Activated CD4-positive, alpha-beta T cell treated with anti-CD3 and anti-CD28 coated beads for 36 hours (primary cell): ENCODE measurements at regions of chr6 and their contacts with region 1.

Region 1: GRCh38 chr6:50791900-50792508 is 26.7 kb upstream of the TFAP2B start:
- DNase-seq: no peak
- ATAC-seq: no peak
- H3K4me3 Mint-ChIP-seq: no peak overlapping the region
- H3K27ac Mint-ChIP-seq: no peak overlapping the region
- H3K4me1 Mint-ChIP-seq: no peaks in the 10 kb centered on the region
- H3K27me3 Mint-ChIP-seq: peaks cover 12% of the 10 kb centered on the region

Region 2: DNA sequence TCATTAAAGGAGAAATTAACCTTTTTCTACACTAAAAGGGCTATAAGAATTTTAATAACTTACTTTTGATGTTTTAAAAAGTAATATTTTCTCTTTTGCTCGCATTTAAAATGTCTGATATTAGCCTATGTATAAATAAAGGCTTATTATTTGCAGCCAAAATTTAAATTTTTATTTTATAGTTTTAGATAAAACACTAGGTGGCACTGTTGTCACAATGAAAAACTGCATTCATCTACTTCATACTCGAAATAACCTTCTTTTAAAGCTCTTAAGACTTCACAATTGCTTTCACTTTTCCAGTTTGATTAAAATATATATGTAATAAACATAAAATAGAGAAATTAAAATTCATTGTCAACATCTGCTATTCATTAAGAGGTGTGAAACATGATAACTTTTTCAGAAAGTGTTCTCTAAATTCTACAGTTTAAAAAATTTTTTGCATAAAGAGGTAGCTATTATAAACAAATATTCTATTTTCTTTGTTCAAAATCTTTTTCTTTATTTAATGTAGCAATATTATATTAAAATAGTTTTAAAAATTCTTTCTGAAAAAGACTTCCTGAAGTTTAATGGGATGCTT is 663.5 kb before region 1 on chr6:
- CTCF ChIA-PET with region 1: interaction called, 5 read pairs
- POLR2A ChIA-PET with region 1: no interaction called
- intact Hi-C with region 1: loop called (anchors 1 to 5 kb)
- DNase-seq: no peak
- ATAC-seq: no peak
- H3K4me3 Mint-ChIP-seq: no peak overlapping the region
- H3K27ac Mint-ChIP-seq: no peak overlapping the region
- H3K4me1 Mint-ChIP-seq: no peaks in the 10 kb centered on the region
- H3K27me3 Mint-ChIP-seq: no peaks in the 10 kb centered on the region

Region 3: DNA sequence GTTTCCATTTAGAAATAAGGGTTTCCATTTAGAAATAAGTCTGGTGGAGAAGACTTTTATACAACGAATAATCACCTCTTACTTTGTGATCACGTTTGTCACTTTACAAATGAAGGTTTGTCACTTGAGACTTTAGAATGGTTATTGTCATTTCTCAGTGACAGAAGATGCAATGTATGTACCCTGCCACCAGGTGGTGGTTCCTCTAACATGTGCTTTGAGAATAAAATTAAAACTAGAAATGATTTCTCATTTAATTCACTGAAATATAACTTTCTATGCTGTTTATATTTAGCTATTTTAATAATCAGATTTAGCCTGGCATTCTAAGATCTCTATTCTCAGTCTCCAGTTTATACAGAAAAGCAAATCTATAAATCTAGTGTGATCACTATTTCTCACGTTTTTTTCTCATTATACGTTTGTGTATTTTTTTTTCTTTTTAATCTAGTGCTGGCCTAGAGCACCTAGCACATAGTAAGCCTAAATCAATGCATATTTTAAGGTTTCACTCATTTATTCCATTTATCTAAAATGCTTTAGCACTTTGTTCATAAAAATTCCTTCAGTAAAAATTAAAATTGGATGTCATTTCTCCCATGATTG is 136.1 kb before region 1 on chr6:
- CTCF ChIA-PET with region 1: no interaction called
- POLR2A ChIA-PET with region 1: no interaction called
- intact Hi-C with region 1: loop called (anchors 5 kb)
- DNase-seq: peak; percentile 12
- ATAC-seq: no peak
- H3K4me3 Mint-ChIP-seq: no peak overlapping the region
- H3K27ac Mint-ChIP-seq: no peak overlapping the region
- H3K4me1 Mint-ChIP-seq: no peaks in the 10 kb centered on the region
- H3K27me3 Mint-ChIP-seq: no peaks in the 10 kb centered on the region

Region 4: GRCh38 chr6:50714487-50715379 is 77.3 kb before region 1 on chr6:
- CTCF ChIA-PET with region 1: no interaction called
- POLR2A ChIA-PET with region 1: no interaction called
- intact Hi-C with region 1: no loop called
- DNase-seq: no peak
- ATAC-seq: no peak
- H3K4me3 Mint-ChIP-seq: no peak overlapping the region
- H3K27ac Mint-ChIP-seq: no peak overlapping the region
- H3K4me1 Mint-ChIP-seq: no peaks in the 10 kb centered on the region
- H3K27me3 Mint-ChIP-seq: peaks cover 73% of the 10 kb centered on the region